Spleen (tissue), 13 donors: ENCODE measurements at regions of chr2 and their contacts with region 1.

Region 1: DNA sequence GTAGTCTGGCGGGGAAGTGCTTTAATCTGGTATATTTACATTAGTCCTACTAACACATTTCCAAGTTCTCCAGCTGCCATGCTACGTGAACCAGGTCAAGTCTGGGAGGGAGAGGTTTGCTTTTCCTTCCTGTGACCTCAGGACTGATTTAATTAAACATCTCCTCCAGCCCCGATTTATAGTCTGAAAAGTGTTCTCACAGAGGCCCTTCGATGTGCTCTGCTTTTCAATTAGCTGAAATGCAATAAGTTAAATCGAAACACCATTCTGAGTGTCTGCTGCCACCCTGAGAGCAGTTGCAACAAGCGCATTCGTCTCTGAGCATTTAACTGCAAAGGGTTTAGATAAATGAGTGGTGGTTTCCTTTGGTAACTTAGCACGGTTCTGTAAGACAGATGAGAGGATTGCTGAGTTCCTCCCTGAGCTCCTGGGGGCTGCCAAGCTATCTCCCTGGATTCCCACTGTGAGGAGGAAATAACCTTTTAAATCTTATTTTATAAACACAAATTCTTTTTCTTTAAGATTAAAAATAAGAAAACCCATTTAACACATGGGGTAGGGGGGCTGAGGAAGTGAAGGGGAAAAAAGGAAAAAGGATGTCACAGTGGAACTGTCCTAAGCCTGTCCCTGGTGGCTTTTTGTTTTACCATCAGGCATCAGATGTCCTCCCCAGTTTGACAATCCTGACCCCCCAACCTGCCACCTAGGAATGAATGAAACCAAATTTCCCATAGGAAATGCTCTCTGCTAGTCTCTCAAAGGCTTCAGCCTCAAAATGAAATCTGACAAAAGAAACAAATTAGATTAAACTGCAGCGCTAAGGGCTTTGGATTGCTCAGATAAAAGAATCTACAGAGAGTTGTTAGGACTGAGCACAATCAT is 56.5 kb upstream of the CREB1 start:
- DNase-seq: no peak
- H3K4me3 ChIP-seq: no peak overlapping the region
- H3K27ac ChIP-seq: no peak overlapping the region
- H3K4me1 ChIP-seq: peaks cover 0 to 26% (median 13%) of the 10 kb centered on the region in 6 donors
- H3K27me3 ChIP-seq: no peaks in the 10 kb centered on the region
- CTCF ChIP-seq: peak in 8 of 11 experiments; percentile 32 to 55 (median 50)
- POLR2A ChIP-seq: no peak

Region 2: GRCh38 chr2:206693399-206694137 is 779.7 kb before region 1 on chr2:
- intact Hi-C with region 1: loop called (anchors 5 kb)
- DNase-seq: no peak
- H3K4me3 ChIP-seq: no peak overlapping the region
- H3K27ac ChIP-seq: no peak overlapping the region
- H3K4me1 ChIP-seq: no peaks in the 10 kb centered on the region
- H3K27me3 ChIP-seq: peaks cover 0 to 2% (median 0%) of the 10 kb centered on the region in 7 donors
- CTCF ChIP-seq: peak in 10 of 11 experiments; percentile 40 to 67 (median 61)
- POLR2A ChIP-seq: no peak

Region 3: DNA sequence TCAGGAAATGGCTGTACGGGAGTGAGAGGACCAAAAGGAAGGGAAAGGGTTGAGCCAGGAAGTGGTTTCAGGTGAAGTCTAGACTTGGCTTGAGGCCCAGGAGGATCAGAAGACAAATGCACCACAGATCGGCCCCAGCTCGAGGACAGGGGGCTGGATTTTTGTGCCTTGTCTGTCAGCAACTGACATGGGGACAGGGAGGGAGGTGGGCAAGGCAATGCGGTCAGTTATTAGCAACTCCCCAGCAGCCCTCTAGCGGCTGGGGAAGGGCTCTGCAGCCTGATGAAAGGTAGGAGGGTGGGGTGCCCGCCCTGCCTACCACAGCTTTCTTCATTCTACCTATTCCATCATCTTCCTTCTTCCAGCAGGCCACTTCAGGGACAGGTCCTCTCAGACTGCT is 484.0 kb before region 1 on chr2:
- intact Hi-C with region 1: loop called (anchors 5 kb)
- DNase-seq: peak; percentile 82
- H3K4me3 ChIP-seq: no peak overlapping the region
- H3K27ac ChIP-seq: no peak overlapping the region
- H3K4me1 ChIP-seq: peaks cover 0 to 16% (median 7%) of the 10 kb centered on the region in 6 donors
- H3K27me3 ChIP-seq: no peaks in the 10 kb centered on the region
- CTCF ChIP-seq: peak; percentile 31 to 83 (median 63)
- POLR2A ChIP-seq: no peak

Region 4: GRCh38 chr2:207166039-207166348 is 307.3 kb before region 1 on chr2:
- intact Hi-C with region 1: loop called (anchors 10 kb)
- DNase-seq: peak; percentile 98
- H3K4me3 ChIP-seq: peak overlapping the region; percentile 51 to 73 (median 63)
- H3K27ac ChIP-seq: peak overlapping the region; percentile 99 to 100 (median 100)
- H3K4me1 ChIP-seq: peaks cover 11 to 58% (median 35%) of the 10 kb centered on the region in 6 donors
- H3K27me3 ChIP-seq: peaks cover 0 to 15% (median 0%) of the 10 kb centered on the region in 7 donors
- CTCF ChIP-seq: no peak
- POLR2A ChIP-seq: peak in 1 of 3 donors; percentile 71

Region 5: GRCh38 chr2:207833251-207833751 is 360.0 kb after region 1 on chr2:
- intact Hi-C with region 1: no loop called
- DNase-seq: no peak
- H3K4me3 ChIP-seq: no peak overlapping the region
- H3K27ac ChIP-seq: no peak overlapping the region
- H3K4me1 ChIP-seq: peaks cover 0 to 17% (median 7%) of the 10 kb centered on the region in 6 donors
- H3K27me3 ChIP-seq: no peaks in the 10 kb centered on the region
- CTCF ChIP-seq: no peak
- POLR2A ChIP-seq: no peak